ENCODE measurements at regions of chr12 and their contacts with region 1.

Region 1: DNA sequence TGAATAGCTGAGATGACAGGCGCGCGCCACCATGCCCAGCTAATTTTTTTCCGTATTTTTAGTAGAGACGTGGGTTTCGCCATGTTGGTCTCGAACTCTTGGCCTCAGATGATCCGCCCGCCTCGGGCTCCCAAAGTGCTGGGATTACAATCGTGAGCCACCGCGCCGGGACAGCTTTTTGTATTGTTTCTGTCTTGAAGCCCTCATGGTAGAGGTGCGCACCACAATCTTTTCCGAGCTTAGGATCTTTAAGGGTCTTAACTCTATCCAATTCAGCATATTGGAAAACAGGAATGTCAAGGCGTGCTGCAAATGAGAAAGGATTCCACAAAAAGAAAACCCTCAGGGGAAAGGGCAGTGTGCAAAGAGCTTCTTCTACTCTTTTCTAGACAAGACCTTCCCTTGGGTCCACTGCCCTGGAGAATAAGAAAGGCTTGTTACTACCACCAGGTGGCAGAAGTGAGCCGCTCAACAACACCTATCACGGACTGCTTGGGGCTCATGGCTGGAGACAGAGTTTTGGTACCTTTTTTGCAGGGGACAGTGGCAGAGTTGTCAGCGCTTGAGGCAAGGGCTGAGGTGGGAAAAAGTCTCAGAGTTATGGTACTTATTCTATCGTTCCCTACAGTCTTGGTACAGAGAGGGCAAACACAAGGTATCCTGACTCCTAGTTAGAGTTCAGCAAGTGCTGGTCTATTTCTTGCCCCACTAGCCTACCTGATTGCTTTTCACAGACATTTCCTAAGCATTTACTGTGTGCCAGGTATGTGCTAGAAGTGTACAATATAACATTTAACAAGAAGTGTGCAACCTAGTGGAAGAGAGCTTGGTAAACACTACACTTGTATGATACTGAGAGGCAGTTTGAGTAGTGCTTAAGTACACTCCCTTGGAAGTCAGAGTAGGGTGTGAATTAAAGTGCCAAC is 16.4 kb upstream of the SP7 start:
- DNase-seq: peak; percentile 68
- ATAC-seq: peak; percentile 100
- H3K4me3 ChIP-seq: no peak overlapping the region
- H3K27ac ChIP-seq: no peak overlapping the region
- H3K4me1 ChIP-seq: peaks cover 2% of the 10 kb centered on the region
- H3K27me3 ChIP-seq: no peaks in the 10 kb centered on the region
- CTCF ChIP-seq: peak; percentile 82 to 91 (median 89)
- EP300 ChIP-seq: no peak
- POLR2A ChIP-seq: no peak
- RAD21 ChIP-seq: peak; percentile 100

Region 2: DNA sequence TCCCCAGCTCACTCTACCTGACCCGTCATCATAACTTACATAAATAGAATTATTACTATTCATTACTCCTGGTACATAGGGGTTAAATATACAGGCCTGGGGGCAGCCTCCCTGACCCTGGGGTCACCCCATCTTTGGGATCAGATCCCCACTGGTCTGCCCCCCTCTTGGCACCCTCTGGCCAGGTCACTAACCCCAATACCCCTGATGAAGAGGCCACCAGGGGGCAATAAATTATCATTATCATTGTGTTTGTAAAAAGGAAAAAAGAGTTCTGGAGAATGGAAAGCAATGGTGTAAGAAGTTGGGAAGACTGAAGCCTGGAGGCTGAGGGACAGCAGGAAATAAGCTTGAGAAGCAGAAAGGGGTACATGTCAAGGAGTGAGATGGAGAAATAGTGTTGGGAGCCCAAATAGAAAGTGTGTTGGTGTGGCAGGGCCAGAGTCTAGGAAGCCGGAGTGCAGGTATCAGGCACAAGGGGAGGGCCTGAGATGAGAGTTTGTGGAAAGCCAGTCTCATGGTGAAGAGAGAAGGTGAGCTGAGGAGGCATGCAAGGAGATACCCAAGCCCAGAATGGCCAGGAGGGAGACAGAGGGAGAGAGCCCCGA is 25.1 kb before region 1 on chr12:
- CTCF ChIA-PET with region 1: interaction called, 240 read pairs
- POLR2A ChIA-PET with region 1: interaction called, 4 read pairs
- RAD21 ChIA-PET with region 1: interaction called, 16 read pairs
- SMC1A ChIA-PET with region 1: interaction called, 26 read pairs
- in situ Hi-C with region 1: no loop called
- intact Hi-C with region 1: no loop called
- DNase-seq: no peak
- ATAC-seq: no peak
- H3K4me3 ChIP-seq: no peak overlapping the region
- H3K27ac ChIP-seq: no peak overlapping the region
- H3K4me1 ChIP-seq: peaks cover 17% of the 10 kb centered on the region; the same call in 1 of the 2 replicates
- H3K27me3 ChIP-seq: peaks cover 0 to 1% of the 10 kb centered on the region in 2 experiments; a peak in 2 of 4 replicates
- CTCF ChIP-seq: peak; percentile 18 to 38 (median 24); a peak in 3 of 6 replicates
- EP300 ChIP-seq: no peak
- POLR2A ChIP-seq: no peak
- RAD21 ChIP-seq: peak; percentile 48

Region 3: DNA sequence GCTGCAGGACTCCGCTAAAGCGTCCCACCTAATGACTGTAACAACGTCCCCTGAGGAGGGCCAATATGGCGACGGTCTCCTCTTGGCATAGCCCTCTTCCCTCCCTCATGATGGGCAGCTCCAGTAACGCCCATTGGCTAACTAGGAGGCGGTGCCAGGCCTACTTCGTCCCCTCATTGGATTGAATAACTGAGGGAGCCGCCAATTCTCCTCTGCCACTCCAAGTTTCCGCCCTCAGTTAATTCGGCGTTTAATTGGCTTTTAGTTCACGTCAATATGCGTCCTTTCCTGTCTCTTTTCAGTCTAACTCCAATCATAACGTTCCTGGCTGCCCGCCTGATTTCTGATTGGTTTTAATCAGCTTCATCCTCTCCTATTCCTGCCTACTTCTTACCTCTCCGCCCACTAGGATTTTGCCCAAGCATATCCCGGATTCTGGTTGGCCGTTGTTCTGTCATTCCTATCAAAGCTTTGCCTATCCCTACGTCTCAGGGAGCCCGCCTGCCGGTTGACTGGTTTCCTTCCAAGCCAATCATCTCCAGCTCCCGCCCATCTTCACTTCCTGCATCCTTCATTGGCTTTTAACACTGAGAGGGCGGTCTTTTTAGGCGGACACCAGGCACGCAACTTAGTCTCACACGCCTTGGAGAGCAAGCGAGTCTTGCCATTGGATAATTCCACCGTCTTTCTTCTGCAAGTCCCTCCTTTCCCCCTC is 27.0 kb after region 1 on chr12:
- CTCF ChIA-PET with region 1: interaction called, 164 read pairs
- POLR2A ChIA-PET with region 1: interaction called, 37 read pairs
- RAD21 ChIA-PET with region 1: interaction called, 91 read pairs
- SMC1A ChIA-PET with region 1: interaction called, 124 read pairs
- in situ Hi-C with region 1: no loop called
- intact Hi-C with region 1: loop called (anchors 1 kb)
- DNase-seq: peak; percentile 100
- ATAC-seq: peak; percentile 84
- H3K4me3 ChIP-seq: peak overlapping the region; percentile 62
- H3K27ac ChIP-seq: peak overlapping the region; percentile 89
- H3K4me1 ChIP-seq: peaks cover 25% of the 10 kb centered on the region
- H3K27me3 ChIP-seq: no peaks in the 10 kb centered on the region
- CTCF ChIP-seq: no peak
- EP300 ChIP-seq: no peak
- POLR2A ChIP-seq: peak; percentile 97
- RAD21 ChIP-seq: no peak

Region 4: DNA sequence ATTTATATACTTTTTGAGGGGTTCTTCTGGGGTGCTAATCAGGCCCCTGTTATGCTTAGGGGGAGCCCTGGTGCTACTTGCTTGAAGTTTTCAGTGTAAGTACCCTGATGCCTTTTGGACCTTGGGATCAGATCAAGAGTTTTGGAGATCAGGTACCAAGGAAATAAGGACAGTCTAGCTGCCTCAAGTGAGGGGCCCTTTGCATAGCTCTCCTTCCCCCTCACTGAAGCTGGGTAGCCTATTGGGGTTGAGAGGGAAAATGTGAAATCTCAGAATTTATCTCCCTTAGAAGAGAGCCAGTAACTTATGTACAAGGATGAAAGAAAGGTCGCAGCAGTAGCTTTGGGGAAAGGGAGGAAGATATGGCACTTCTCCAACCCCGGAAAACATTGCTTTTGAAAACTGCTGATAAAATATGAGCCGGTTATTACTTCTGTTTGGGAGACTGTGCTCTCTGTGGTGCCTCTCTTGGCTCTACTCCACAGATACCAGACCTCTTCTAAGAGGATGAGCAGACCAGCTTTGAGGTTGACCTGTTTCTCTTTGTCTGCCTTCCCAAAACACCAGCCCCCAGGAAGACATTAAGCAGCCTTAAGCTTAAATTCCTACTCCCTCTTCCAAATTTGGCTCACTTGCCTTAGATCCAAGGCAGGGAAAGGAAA is 62.3 kb after region 1 on chr12:
- CTCF ChIA-PET with region 1: interaction called, 225 read pairs
- POLR2A ChIA-PET with region 1: interaction called, 12 read pairs
- RAD21 ChIA-PET with region 1: interaction called, 90 read pairs
- SMC1A ChIA-PET with region 1: interaction called, 164 read pairs
- in situ Hi-C with region 1: loop called (anchors 5 kb)
- intact Hi-C with region 1: no loop called
- DNase-seq: no peak
- ATAC-seq: no peak
- H3K4me3 ChIP-seq: no peak overlapping the region
- H3K27ac ChIP-seq: no peak overlapping the region
- H3K4me1 ChIP-seq: peaks cover 18% of the 10 kb centered on the region
- H3K27me3 ChIP-seq: no peaks in the 10 kb centered on the region
- CTCF ChIP-seq: no peak
- EP300 ChIP-seq: no peak
- POLR2A ChIP-seq: no peak
- RAD21 ChIP-seq: no peak

Region 5: GRCh38 chr12:53476769-53477209 is 124.2 kb after region 1 on chr12:
- CTCF ChIA-PET with region 1: interaction called, 12 read pairs
- POLR2A ChIA-PET with region 1: interaction called, 3 read pairs
- RAD21 ChIA-PET with region 1: interaction called, 15 read pairs
- SMC1A ChIA-PET with region 1: interaction called, 17 read pairs
- in situ Hi-C with region 1: no loop called
- intact Hi-C with region 1: no loop called
- DNase-seq: no peak
- ATAC-seq: peak; percentile 60
- H3K4me3 ChIP-seq: no peak overlapping the region
- H3K27ac ChIP-seq: no peak overlapping the region
- H3K4me1 ChIP-seq: 0 out of 2 replicates have a peak, but pooled peaks cover 2% of the 10 kb centered on the region
- H3K27me3 ChIP-seq: no peaks in the 10 kb centered on the region
- CTCF ChIP-seq: peak in 2 of 3 experiments; percentile 10 to 34; a peak in 2 of 6 replicates
- EP300 ChIP-seq: no peak
- POLR2A ChIP-seq: no peak
- RAD21 ChIP-seq: no peak

Region 6: DNA sequence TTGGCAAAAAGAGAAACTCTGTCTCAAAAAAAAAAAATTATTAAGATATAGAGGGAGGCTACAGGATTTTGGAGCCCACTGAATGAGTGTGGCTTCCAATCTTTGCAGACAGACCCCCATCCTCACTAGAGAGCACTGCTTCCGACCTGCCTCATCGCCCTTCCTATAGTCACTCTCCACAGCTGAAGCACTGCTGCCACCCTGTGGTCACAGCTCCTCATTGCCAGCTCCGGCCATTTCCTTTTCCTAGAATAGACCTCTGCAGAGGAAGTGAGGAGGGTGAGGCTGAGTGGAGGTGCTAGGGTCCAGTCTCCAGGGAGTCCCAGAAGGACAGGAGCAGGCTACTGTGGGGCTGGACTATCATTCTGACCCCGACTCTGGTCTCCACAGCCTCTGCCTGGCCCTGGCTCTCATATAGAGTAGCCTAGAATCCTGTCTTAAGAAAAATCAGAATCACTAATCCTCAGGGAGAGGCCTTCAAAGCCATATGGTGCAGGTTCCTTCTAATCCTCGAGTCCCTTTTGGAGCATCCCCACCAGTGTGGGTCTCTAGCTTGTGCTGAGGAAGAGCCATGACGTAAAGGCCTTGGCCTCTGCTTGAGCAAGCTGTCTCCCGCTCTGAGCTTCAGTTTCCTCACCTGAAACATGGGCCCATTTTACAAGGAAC is 156.1 kb after region 1 on chr12:
- CTCF ChIA-PET with region 1: interaction called, 55 read pairs
- POLR2A ChIA-PET with region 1: interaction called, 9 read pairs
- RAD21 ChIA-PET with region 1: interaction called, 46 read pairs
- SMC1A ChIA-PET with region 1: interaction called, 26 read pairs
- in situ Hi-C with region 1: no loop called
- intact Hi-C with region 1: loop called (anchors 1 kb)
- DNase-seq: peak; percentile 60
- ATAC-seq: peak; percentile 99
- H3K4me3 ChIP-seq: no peak overlapping the region
- H3K27ac ChIP-seq: no peak overlapping the region
- H3K4me1 ChIP-seq: 0 out of 2 replicates have a peak, but pooled peaks cover 3% of the 10 kb centered on the region
- H3K27me3 ChIP-seq: no peaks in the 10 kb centered on the region
- CTCF ChIP-seq: peak; percentile 94 to 99 (median 96); a peak in 5 of 6 replicates
- EP300 ChIP-seq: no peak
- POLR2A ChIP-seq: no peak
- RAD21 ChIP-seq: peak; percentile 97